GM13977 (cell line): ENCODE measurements at regions of chr11 and their contacts with region 1.

Region 1: DNA sequence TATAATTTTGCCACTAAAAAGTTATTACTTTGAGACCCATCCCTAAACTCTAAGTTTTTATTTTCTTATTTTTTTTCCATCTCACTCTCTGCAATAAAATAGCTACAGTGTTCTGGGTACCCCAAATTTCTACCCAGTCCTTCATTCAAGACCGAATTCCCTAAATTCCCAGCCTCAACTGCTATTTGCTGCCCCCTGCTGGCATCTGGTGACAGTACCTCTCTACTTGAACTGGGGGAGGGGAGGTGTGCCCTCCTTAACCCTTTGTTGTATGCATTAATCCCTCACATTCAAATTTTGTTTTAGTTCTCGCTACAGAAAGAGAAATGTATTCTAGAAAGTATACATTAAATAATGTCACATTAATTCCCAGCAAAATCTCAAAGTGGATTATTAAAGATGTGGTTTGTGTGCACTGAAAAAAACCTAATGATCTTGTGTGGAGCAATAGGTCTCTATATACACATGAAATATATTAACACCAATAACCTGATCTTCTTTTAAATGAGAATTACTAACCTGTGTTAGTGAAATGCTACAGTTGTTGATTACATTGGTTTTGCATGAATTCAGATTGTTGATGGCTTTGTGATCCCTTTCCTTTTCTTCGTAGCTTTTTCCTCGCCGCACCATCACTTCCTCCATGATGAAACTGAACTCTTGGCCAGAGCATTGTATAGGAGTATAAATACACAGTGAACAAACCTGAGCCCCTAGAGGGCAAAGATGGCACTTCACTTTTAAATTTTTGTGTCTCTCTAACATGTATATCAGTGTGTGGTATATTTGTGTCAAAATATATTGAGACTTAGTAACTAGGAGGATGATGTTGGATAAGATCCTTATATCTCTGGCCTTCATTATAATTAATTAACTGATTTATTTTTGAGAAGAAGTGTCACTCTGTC is 590.0 kb downstream of the METTL15 start:
- DNase-seq: no peak
- CTCF ChIP-seq: peak; percentile 86

Region 2: GRCh38 chr11:27698872-27699474 is 999.2 kb before region 1 on chr11:
- in situ Hi-C with region 1: loop called (anchors 25 kb)
- DNase-seq: peak; percentile 78
- CTCF ChIP-seq: peak; percentile 82

Region 3: DNA sequence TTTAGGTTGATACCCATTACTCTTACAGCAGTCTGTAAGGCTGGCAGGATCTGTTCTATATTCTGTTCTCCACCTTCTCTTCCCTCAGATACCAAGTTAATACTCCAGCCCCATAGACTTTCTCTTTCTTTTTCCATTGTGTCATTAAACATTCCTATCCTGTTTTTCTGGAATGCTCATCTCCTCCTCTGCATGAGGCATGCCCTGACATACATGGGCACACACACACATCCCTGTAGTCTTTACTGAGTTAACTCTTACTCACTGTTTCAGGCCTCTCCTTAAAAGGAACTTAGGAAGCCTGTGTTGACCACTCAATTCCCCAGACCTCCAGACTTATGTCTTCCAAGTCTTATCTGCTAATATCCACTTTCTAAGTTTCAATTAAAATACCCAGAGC is 113.2 kb before region 1 on chr11:
- in situ Hi-C with region 1: no loop called
- DNase-seq: no peak
- CTCF ChIP-seq: no peak

Region 4: GRCh38 chr11:28819741-28820140 is 121.6 kb after region 1 on chr11:
- in situ Hi-C with region 1: no loop called
- DNase-seq: no peak
- CTCF ChIP-seq: no peak

Region 5: DNA sequence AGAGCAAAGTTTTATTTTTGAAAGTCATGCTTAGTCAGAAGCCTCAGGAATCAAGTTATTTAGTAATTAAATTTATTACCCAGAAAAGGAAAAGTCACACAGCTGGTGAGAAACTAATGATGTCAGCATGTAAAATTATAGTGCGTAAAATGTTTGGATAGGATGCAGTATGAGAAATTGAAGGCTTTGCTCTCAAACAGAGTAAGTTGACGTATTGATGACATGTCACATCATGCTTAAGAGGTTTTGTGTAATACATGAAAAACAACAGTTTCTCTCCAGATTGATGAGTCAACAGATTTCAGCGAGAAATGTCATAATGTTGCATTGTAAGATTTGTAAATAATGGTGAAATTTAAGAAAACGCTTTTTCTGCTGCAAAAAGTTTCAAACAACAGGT is 179.9 kb after region 1 on chr11:
- in situ Hi-C with region 1: no loop called
- DNase-seq: no peak
- CTCF ChIP-seq: no peak

Region 6: DNA sequence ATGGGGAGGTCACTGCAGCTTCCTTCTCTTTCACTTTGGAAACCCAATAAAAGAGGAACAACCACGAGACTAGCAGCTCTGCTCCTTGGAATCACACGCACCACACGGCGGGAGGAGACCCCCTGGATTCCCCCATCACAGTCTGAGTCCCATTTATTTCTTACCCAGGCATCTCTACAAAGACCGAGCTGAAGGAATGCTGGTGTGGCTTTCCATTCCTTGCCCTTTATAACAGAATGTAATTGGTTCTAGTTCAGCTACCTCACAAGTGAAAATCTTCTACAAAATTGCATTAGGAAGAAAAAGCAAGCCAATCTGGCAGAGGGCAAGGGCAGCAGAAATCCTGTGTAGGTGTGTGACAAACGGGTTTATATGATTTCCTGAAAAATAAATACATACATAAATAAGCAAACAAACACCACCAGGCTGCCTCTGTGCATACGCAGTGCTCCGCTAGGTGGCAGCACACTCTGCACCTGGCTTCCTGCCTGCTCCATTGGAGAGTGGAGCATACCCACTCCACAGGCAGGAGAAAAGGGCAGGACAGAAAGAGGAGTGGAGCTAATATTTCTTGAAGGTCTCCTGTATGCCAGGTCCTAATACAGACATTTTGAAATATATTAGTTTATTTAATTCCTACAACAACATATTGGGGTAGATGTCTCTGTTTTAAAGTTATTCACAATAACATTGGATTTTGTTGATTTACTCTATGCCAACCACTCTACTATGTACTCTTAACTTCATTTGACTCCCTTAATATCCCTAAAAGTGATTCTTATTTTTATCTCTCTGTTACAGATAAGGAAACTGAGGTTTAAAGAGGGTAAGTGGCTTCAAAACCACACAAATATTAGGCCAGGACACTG is 645.5 kb after region 1 on chr11:
- in situ Hi-C with region 1: loop called (anchors 25 kb)
- DNase-seq: peak; percentile 9
- CTCF ChIP-seq: peak; percentile 97